AG04449 (cell line): ENCODE measurements at regions of chr15 and their contacts with region 1.

Region 1: GRCh38 chr15:90648137-90649070 is 68.7 kb upstream of the BLM start:
- DNase-seq: no peak
- H3K4me3 ChIP-seq: no peak overlapping the region
- CTCF ChIP-seq: peak; percentile 78

Region 2: GRCh38 chr15:90610190-90610589 is 38.2 kb before region 1 on chr15:
- CTCF ChIA-PET with region 1: no interaction called
- POLR2A ChIA-PET with region 1: no interaction called
- DNase-seq: peak; percentile 24
- H3K4me3 ChIP-seq: no peak overlapping the region
- CTCF ChIP-seq: no peak

Region 3: DNA sequence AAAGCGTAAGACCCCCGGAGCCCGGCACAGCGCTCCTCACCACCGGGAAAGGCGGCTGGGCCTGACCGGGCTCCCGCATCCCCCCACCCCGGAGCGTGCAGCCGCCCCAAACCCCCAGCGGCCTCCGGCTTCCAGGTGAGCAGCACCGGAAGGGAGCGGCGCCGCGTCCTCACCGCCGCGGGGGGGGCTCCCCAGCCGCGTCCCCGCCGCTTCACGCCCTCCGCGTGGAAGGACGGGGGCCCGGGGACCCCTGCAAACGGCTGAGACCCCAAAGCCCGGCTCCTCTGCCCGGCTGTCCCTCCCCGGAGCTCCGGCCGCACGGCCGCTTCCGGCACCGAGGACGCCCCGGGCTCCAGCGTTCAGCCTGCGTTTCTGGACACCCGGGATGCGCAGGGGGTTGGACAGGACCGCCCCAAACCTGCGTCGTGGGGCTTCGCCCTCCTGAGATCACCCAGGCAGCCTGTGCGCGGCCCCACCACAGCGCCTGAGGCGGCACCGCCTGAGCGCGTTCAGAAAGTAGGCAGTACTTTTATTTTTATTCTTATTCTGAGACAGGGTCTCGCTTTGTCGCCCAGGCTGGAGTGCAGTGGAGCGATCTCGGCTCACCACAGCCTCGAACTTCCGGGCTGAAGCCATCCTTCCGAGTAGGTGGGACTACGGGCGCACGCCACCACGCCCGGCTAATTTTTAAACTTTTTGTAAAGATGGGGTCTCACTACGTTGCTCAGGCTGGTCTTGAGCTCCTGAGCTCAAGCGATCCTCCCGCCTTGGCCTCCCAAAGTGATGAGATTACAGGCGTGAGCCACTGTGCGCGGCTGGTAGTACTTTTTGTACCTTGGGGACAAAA is 17.1 kb after region 1 on chr15:
- CTCF ChIA-PET with region 1: interaction called, 13 read pairs
- POLR2A ChIA-PET with region 1: no interaction called
- DNase-seq: no peak
- H3K4me3 ChIP-seq: peak overlapping the region; percentile 61
- CTCF ChIP-seq: no peak

Region 4: DNA sequence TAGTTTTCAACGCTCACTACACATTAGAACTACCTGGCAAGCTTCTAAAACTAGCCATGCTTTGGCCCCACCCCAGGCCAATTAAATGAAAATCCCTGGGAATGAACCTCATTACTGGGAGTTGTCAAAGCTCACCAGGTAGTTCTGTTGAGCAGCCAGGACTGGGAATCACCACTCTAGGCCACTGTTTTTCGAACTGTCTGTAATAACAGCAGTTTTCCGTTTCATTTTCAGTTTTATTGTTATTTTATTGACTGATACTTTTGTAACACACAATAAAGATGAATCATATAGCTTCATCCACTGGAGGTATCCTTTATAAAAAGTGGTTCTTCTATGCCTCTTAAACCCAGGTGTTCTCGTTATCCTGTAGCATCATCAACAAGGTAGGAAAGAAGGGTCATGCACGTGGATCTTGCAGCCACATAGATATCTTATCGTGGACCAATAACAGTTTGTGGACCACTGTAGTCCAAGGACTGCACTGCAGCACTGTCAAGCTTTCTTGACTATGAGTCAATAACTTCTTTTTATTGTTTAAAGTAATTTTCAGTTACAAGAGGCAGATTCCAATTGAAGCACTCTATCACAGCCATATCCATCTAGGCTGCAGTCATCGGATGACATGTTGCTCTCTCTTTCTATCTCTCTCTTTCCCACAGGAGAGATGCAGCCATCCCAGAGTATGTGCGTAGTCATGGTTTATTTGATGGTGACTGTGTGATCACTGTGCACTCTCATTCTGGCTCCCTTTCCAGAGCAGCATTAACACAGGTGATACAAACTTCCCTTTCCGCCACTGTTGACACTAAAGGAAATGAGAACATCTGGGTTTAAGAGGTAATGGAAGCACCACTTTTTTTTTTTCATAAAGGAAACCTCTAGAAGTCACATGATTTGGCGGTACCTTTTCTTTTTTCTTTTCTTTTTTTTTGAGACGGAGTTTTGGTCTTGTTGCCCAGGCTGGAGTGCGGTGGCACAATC is 29.7 kb after region 1 on chr15:
- CTCF ChIA-PET with region 1: interaction called, 10 read pairs
- POLR2A ChIA-PET with region 1: no interaction called
- DNase-seq: no peak
- H3K4me3 ChIP-seq: no peak overlapping the region
- CTCF ChIP-seq: no peak

Region 5: DNA sequence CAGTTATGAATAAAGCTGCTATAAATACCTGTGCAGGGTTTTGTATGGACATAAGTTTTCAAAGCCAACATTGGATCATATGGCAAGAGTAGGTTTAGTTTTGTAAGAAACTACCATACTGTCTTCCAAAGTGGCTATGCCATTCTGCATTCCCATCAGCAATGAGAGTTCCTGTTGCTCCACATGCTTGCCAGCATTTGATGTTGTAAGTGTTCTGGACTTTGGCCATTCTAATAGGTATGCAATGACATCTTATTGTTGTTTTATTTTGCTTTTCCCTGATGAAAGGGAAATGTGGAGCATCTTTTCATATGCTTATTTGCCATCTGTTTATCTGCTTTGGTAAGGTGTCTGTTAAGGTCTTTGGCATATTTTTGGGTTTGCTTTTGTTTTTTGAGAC is 46.6 kb after region 1 on chr15:
- CTCF ChIA-PET with region 1: interaction called, 44 read pairs
- POLR2A ChIA-PET with region 1: no interaction called
- DNase-seq: no peak
- H3K4me3 ChIP-seq: no peak overlapping the region
- CTCF ChIP-seq: no peak

Region 6: GRCh38 chr15:90902040-90902839 is 253.8 kb after region 1 on chr15:
- CTCF ChIA-PET with region 1: interaction called, 12 read pairs
- POLR2A ChIA-PET with region 1: no interaction called
- DNase-seq: peak; percentile 21
- H3K4me3 ChIP-seq: peak overlapping the region; percentile 76
- CTCF ChIP-seq: peak; percentile 82